ENCODE measurements at regions of chr19 and their contacts with region 1.

Region 1: GRCh38 chr19:53537480-53538383 is at the start of gene ZNF331:
- DNase-seq: peak; percentile 69 to 93
- H3K4me3 ChIP-seq: peak within 1 kb of the TSS; percentile 51 to 81
- H3K27ac ChIP-seq: peak within 1 kb of the TSS; percentile 86 to 89
- H3K4me1 ChIP-seq: no peaks in the 10 kb centered on the region
- H3K27me3 ChIP-seq: no peaks in the 10 kb centered on the region
- CTCF ChIP-seq: peak; percentile 22 to 66 (median 30)
- total RNA-seq, gene ZNF331: 34.5 TPM

Region 2: GRCh38 chr19:53553884-53554791 is 16.4 kb after region 1 on chr19:
- intact Hi-C with region 1: loop called (anchors 1 kb)
- DNase-seq: peak; percentile 61 to 94
- H3K4me3 ChIP-seq: peak overlapping the region; percentile 54 to 74
- H3K27ac ChIP-seq: peak overlapping the region; percentile 92
- H3K4me1 ChIP-seq: peaks cover 0 to 8% of the 10 kb centered on the region in 2 donors
- H3K27me3 ChIP-seq: no peaks in the 10 kb centered on the region
- CTCF ChIP-seq: no peak

Measured in ascending aorta (tissue), 2 donors.